Dorsolateral prefrontal cortex (tissue), 120 donors: ENCODE measurements at regions of chr6 and their contacts with region 1.

Region 1: GRCh38 chr6:112043032-112044007 is 10.6 kb upstream of the CCN6 start:
- DNase-seq: peak; percentile 88 to 95 (median 92)
- H3K4me3 ChIP-seq: peak overlapping the region; percentile 41 to 83 (median 67)
- H3K27ac ChIP-seq: peak overlapping the region; percentile 10 to 97 (median 87)
- H3K27me3 ChIP-seq: no peaks in the 10 kb centered on the region
- CTCF ChIP-seq: peak; percentile 83 to 99 (median 93)

Region 2: DNA sequence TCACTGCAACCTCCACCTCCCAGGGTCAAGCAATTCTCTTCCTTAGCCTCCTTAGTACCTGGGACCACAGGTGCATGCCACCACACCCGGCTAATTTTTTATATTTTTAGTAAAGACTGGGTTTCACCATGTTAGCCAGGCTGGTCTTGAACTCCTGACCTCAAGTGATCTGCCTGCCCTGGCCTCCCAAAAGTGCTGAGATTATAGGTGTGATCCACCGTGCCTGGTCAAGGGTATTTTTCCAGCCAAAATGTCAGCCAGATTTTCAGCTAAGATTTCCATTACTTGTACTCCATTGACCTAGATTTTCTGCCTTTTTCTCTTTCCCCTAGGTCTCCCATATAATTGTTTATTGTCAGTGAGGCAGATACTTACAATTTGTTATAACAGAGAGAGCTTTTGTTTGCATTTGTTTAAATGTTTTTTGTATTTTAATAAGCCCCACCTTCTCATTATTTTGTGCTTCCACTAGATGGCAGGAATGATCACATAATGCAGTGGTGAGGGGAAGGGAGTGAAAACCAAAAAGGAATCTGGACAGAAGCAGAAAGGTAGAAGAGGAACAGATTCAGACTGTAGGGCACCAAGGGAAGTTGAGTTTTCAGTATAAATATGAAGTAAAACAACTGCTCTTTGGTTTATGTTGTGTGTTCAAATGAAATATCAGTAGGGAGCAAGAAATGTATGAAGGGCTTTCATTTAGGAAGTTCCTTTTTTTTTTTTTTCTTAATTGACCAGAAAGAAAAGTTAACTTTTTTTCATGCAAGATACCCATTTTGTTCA is 1031.8 kb before region 1 on chr6:
- intact Hi-C with region 1: loop called in 1 of 2 experiments (anchors 5 kb)
- DNase-seq: no peak
- H3K4me3 ChIP-seq: no peak overlapping the region
- H3K27ac ChIP-seq: peak overlapping the region in 33 of 59 donors; percentile 4 to 80 (median 49)
- H3K27me3 ChIP-seq: no peaks in the 10 kb centered on the region
- CTCF ChIP-seq: peak; percentile 39 to 84 (median 68)

Region 3: GRCh38 chr6:111997078-111997852 is 46.1 kb before region 1 on chr6:
- intact Hi-C with region 1: loop called (anchors 5 kb)
- DNase-seq: peak; percentile 57 to 88 (median 81)
- H3K4me3 ChIP-seq: peak overlapping the region in 45 of 59 donors; percentile 2 to 56 (median 29)
- H3K27ac ChIP-seq: peak overlapping the region in 11 of 59 donors; percentile 4 to 61 (median 32)
- H3K27me3 ChIP-seq: no peaks in the 10 kb centered on the region
- CTCF ChIP-seq: peak; percentile 88 to 99 (median 95)